Naive thymus-derived CD4-positive, alpha-beta T cell (primary cell): ENCODE measurements at regions of chr5 and their contacts with region 1.

Region 1: DNA sequence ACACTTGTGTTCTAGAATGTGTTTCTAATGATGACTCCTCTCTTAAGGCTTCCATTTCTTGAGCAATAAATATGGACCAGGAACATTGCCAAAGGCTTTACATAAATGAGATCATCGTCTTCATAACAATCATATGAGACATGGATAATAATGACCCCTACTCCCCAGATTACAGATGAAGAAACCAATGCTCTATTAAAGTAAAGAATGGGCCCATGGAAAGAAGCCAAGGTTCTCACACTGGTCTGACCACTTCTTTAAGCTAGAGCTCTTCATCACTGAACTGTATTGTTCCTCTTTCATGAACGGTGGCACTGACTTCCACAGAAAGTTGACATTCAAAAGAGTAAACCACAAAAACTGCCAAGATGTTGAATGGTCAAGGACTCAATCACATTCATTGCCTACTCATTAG is 65.3 kb downstream of the MARCHF3 start:
- DNase-seq: no peak
- ATAC-seq: no peak
- H3K4me3 ChIP-seq: no peak overlapping the region
- H3K4me3 Mint-ChIP-seq: no peak overlapping the region
- H3K27ac ChIP-seq: no peak overlapping the region
- H3K27ac Mint-ChIP-seq: no peak overlapping the region
- H3K4me1 ChIP-seq: no peaks in the 10 kb centered on the region
- H3K4me1 Mint-ChIP-seq: peaks cover 0 to 10% (median 4%) of the 10 kb centered on the region in 7 donors
- H3K27me3 ChIP-seq: no peaks in the 10 kb centered on the region
- H3K27me3 Mint-ChIP-seq: no peaks in the 10 kb centered on the region

Region 2: DNA sequence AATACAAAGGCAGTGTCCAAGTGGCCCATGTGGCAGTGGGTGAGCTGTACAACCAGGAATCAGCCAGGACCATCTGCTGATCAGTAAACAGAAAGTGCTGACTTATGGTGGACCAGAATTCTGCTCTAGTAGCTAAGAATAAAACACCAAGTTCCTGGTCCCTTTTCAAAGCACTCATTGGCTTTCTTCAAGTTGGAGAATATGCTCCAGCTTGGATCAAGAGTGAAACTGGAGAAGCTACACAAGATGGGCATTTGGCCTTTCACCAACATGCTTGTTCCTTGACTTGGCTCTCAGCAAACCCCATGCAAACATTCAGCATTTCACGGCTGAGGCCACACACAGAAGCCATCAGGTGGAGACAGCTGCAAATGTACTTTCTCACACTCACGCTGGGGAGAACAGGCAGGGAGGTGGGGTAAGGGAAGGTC is 33.1 kb after region 1 on chr5:
- CTCF ChIA-PET with region 1: no interaction called
- POLR2A ChIA-PET with region 1: interaction called, 3 read pairs
- intact Hi-C with region 1: loop called in 1 of 2 experiments (anchors 5 kb)
- DNase-seq: no peak
- ATAC-seq: no peak
- H3K4me3 ChIP-seq: no peak overlapping the region
- H3K4me3 Mint-ChIP-seq: no peak overlapping the region
- H3K27ac ChIP-seq: no peak overlapping the region
- H3K27ac Mint-ChIP-seq: no peak overlapping the region
- H3K4me1 ChIP-seq: no peaks in the 10 kb centered on the region
- H3K4me1 Mint-ChIP-seq: peaks cover 6 to 46% (median 39%) of the 10 kb centered on the region in 7 donors
- H3K27me3 ChIP-seq: no peaks in the 10 kb centered on the region
- H3K27me3 Mint-ChIP-seq: peaks cover 0 to 3% (median 0%) of the 10 kb centered on the region in 5 donors

Region 3: GRCh38 chr5:127042593-127042992 is 77.5 kb after region 1 on chr5:
- CTCF ChIA-PET with region 1: no interaction called
- POLR2A ChIA-PET with region 1: no interaction called
- intact Hi-C with region 1: loop called in 1 of 2 experiments (anchors 2 kb)
- DNase-seq: peak in 1 of 9 donors; percentile 13
- ATAC-seq: no peak
- H3K4me3 ChIP-seq: no peak overlapping the region
- H3K4me3 Mint-ChIP-seq: no peak overlapping the region
- H3K27ac ChIP-seq: no peak overlapping the region
- H3K27ac Mint-ChIP-seq: peak overlapping the region in 1 of 9 donors; percentile 54
- H3K4me1 ChIP-seq: no peaks in the 10 kb centered on the region
- H3K4me1 Mint-ChIP-seq: peaks cover 0 to 1% (median 0%) of the 10 kb centered on the region in 7 donors
- H3K27me3 ChIP-seq: no peaks in the 10 kb centered on the region
- H3K27me3 Mint-ChIP-seq: no peaks in the 10 kb centered on the region